PC-9 (cell line): ENCODE measurements at regions of chr9 and their contacts with region 1.

Region 1: GRCh38 chr9:112104901-112105300 is 70.2 kb downstream of the SUSD1 start:
- DNase-seq: no peak
- H3K4me3 ChIP-seq: no peak overlapping the region
- H3K27ac ChIP-seq: no peak overlapping the region
- H3K4me1 ChIP-seq: peaks cover 11% of the 10 kb centered on the region
- H3K27me3 ChIP-seq: no peaks in the 10 kb centered on the region
- CTCF ChIP-seq: no peak

Region 2: GRCh38 chr9:112665347-112665746 is 560.4 kb after region 1 on chr9:
- CTCF ChIA-PET with region 1: no interaction called
- POLR2A ChIA-PET with region 1: interaction called, 39 read pairs
- intact Hi-C with region 1: no loop called
- DNase-seq: no peak
- H3K4me3 ChIP-seq: no peak overlapping the region
- H3K27ac ChIP-seq: no peak overlapping the region
- H3K4me1 ChIP-seq: no peaks in the 10 kb centered on the region
- H3K27me3 ChIP-seq: no peaks in the 10 kb centered on the region
- CTCF ChIP-seq: peak; percentile 36; the same call in 1 of the 2 replicates

Region 3: GRCh38 chr9:112774006-112774996 is 669.4 kb after region 1 on chr9:
- CTCF ChIA-PET with region 1: no interaction called
- POLR2A ChIA-PET with region 1: no interaction called
- intact Hi-C with region 1: no loop called
- DNase-seq: no peak
- H3K4me3 ChIP-seq: no peak overlapping the region
- H3K27ac ChIP-seq: no peak overlapping the region
- H3K4me1 ChIP-seq: no peaks in the 10 kb centered on the region
- H3K27me3 ChIP-seq: no peaks in the 10 kb centered on the region
- CTCF ChIP-seq: no peak

Region 4: GRCh38 chr9:112955550-112955949 is 850.6 kb after region 1 on chr9:
- CTCF ChIA-PET with region 1: no interaction called
- POLR2A ChIA-PET with region 1: no interaction called
- intact Hi-C with region 1: no loop called
- DNase-seq: no peak
- H3K4me3 ChIP-seq: no peak overlapping the region
- H3K27ac ChIP-seq: no peak overlapping the region
- H3K4me1 ChIP-seq: no peaks in the 10 kb centered on the region
- H3K27me3 ChIP-seq: peaks cover 35% of the 10 kb centered on the region
- CTCF ChIP-seq: no peak